ENCODE measurements at regions of chr19 and their contacts with region 1.

Region 1: DNA sequence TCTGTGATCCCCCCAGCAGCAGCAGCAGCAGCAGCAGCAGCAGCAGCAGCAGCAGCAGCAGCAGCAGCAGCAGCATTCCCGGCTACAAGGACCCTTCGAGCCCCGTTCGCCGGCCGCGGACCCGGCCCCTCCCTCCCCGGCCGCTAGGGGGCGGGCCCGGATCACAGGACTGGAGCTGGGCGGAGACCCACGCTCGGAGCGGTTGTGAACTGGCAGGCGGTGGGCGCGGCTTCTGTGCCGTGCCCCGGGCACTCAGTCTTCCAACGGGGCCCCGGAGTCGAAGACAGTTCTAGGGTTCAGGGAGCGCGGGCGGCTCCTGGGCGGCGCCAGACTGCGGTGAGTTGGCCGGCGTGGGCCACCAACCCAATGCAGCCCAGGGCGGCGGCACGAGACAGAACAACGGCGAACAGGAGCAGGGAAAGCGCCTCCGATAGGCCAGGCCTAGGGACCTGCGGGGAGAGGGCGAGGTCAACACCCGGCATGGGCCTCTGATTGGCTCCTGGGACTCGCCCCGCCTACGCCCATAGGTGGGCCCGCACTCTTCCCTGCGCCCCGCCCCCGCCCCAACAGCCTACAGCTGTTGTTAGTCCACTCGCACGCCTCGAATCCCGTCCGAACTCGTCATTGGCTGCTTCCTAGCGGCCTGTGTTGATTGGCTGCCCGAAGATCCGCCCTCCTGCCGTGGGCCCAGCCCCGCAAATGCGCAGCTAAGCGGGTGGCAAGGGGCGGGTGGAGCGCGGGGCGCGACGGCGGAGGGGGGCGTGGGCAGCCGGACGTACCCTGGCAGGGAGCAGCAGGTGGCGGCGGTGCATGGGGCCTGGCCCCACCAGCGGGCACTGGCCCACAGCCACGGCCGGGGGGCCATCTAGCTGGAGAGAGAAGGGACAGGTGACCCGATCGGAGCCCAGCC is 1.4 kb upstream of the SIX5 start:
- DNase-seq: peak; percentile 93
- ATAC-seq: peak; percentile 60
- H3K4me3 ChIP-seq: peak overlapping the region; percentile 72
- H3K27ac ChIP-seq: peak overlapping the region; percentile 37; the same call in 1 of the 2 replicates
- H3K4me1 ChIP-seq: peaks cover 29% of the 10 kb centered on the region; the same call in 1 of the 2 replicates
- H3K27me3 ChIP-seq: no peaks in the 10 kb centered on the region
- CTCF ChIP-seq: peak; percentile 78

Region 2: DNA sequence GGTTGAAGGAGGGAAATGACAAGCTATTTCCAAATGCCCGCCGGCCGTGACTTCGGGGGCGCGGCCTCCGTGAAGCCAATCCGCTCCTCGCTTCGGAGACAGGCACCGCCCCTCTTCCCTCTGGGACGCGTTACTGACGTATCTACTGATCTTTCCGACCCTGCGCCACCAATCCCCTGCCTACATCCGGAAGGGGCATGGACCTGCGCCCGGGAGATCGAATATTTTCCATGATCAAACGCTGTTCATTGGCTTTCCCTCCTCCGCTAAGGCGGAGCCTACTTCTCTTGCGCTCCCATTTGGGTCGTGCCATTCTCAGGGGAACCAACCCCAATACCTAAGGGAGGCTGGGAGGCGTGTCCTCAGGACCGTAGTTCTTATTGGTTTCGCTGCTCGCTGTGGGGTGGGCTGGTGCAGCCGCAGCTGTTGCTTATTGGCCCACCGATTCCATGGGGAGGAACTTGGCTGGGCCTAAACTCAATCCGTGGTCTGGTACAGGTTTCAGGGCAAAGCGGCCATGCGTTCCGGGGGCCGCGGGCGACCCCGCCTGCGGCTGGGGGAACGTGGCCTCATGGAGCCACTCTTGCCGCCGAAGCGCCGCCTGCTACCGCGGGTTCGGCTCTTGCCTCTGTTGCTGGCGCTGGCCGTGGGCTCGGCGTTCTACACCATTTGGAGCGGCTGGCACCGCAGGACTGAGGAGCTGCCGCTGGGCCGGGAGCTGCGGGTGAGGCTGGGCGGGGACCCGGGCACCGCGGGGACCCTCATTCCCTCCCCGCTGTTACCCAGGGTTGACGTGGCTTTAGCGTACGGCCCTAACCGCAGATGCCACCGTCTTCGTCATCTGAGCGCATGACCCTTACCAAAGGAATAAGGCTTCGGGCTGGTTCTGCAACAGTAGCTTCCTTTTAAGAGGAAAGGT is 78.0 kb before region 1 on chr19 and contains the start of gene QPCTL:
- CTCF ChIA-PET with region 1: interaction called, 8 read pairs
- POLR2A ChIA-PET with region 1: interaction called, 10 read pairs
- intact Hi-C with region 1: loop called (anchors 1 kb)
- DNase-seq: peak; percentile 98
- ATAC-seq: peak; percentile 91
- H3K4me3 ChIP-seq: peak within 1 kb of the TSS; percentile 84
- H3K27ac ChIP-seq: peak within 1 kb of the TSS; percentile 76
- H3K4me1 ChIP-seq: peaks cover 5% of the 10 kb centered on the region; the same call in 1 of the 2 replicates
- H3K27me3 ChIP-seq: no peaks in the 10 kb centered on the region
- CTCF ChIP-seq: no peak
- total RNA-seq, gene QPCTL: 9.8 and 13.4 TPM in 2 replicates

Region 3: GRCh38 chr19:45730389-45731288 is 39.8 kb before region 1 on chr19 and contains the start of gene FBXO46:
- CTCF ChIA-PET with region 1: no interaction called
- POLR2A ChIA-PET with region 1: interaction called, 10 read pairs
- intact Hi-C with region 1: no loop called
- DNase-seq: peak; percentile 95
- ATAC-seq: peak; percentile 99
- H3K4me3 ChIP-seq: peak within 1 kb of the TSS; percentile 86
- H3K27ac ChIP-seq: no peak within 1 kb of the TSS
- H3K4me1 ChIP-seq: no peaks in the 10 kb centered on the region
- H3K27me3 ChIP-seq: no peaks in the 10 kb centered on the region
- CTCF ChIP-seq: 0 out of 2 replicates have a peak, but pooled peaks have one; percentile 19
- total RNA-seq, gene FBXO46: 12.8 and 16.1 TPM in 2 replicates

Region 4: DNA sequence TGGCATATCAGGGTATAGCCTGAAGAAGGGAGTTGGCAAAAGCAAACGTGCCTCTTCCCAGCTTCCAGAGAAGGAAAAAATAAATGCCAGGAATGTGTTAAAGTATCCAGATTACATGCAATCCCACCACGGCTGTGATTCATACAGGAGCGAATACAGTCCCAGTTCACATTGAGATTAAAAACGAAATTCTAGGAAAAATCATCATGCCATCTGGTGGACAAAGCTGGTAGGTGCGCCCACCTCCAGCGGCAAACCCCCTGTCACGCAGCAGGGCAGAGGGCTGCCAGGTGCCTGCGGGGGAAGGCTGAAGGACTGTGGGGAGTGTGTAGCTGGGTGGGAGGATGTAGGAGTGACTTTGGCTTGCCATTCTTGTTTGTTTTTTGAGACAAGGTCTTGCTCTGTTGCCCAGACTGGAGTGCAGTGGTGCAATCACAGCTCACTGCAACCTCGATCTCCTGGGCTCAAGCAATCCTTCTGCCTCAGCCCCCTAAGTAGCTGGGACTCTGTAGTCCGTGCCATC is 28.6 kb after region 1 on chr19:
- CTCF ChIA-PET with region 1: interaction called, 11 read pairs
- POLR2A ChIA-PET with region 1: interaction called, 5 read pairs
- intact Hi-C with region 1: loop called (anchors 1 kb)
- DNase-seq: peak; percentile 65
- ATAC-seq: peak; percentile 90
- H3K4me3 ChIP-seq: no peak overlapping the region
- H3K27ac ChIP-seq: no peak overlapping the region
- H3K4me1 ChIP-seq: no peaks in the 10 kb centered on the region
- H3K27me3 ChIP-seq: no peaks in the 10 kb centered on the region
- CTCF ChIP-seq: peak; percentile 70